ENCODE measurements at regions of chr13 and their contacts with region 1.

Region 1: DNA sequence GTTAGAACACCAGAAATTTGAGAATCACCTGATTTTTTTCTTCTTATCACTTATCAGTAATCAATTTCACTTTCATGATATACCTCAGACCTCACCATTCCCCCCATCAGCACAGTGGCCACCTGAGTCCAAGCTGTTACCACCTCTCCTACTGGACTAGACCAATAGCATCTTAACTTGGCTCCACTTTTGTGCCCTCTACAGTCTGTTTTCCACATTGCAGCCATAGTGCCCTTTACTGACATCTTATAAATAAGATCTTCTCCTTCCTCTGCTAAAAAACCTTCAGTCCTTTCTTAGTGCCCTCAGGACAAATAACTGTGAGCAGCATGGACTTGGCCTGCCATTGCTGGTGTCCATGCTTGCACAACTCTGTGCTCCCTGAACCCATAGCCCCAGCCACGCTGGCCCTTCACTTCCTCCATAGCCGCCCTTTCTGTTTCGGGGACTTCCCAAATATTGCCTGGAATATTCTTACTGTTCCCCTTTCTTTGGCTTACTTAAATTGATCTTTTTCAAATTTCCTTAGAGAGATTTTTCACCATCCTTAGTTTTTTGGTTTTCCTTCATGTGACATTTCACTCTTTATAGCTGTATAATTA is 380.8 kb downstream of the LMO7 start:
- H3K4me3 ChIP-seq: no peak overlapping the region
- H3K27ac ChIP-seq: no peak overlapping the region
- H3K4me1 ChIP-seq: no peaks in the 10 kb centered on the region
- CTCF ChIP-seq: no peak

Region 2: GRCh38 chr13:75876360-75877050 is 140.4 kb before region 1 on chr13:
- CTCF ChIA-PET with region 1: interaction called, 18 read pairs
- POLR2A ChIA-PET with region 1: no interaction called
- H3K4me3 ChIP-seq: no peak overlapping the region
- H3K27ac ChIP-seq: no peak overlapping the region
- H3K4me1 ChIP-seq: no peaks in the 10 kb centered on the region
- CTCF ChIP-seq: peak; percentile 25; the same call in 1 of the 2 replicates

Measured in HEK293 (cell line).